Posterior vena cava (tissue), 2 donors: ENCODE measurements at regions of chr13 and their contacts with region 1.

Region 1: GRCh38 chr13:36088014-36088413 is 43.2 kb downstream of the DCLK1 start:
- DNase-seq: no peak

Region 2: GRCh38 chr13:36193151-36193855 is 105.3 kb after region 1 on chr13:
- intact Hi-C with region 1: loop called in 1 of 2 experiments (anchors 10 kb)
- DNase-seq: no peak